Activated CD4-positive, alpha-beta T cell treated with anti-CD3 and anti-CD28 coated beads, Interleukin-2, amount 10 ng/mL, durations not matched to agents 7 days and 5 days (primary cell): ENCODE measurements at regions of chr1 and their contacts with region 1.

Region 1: GRCh38 chr1:180515864-180516388 is 13.5 kb upstream of the ACBD6 start:
- DNase-seq: peak; percentile 73
- H3K4me3 Mint-ChIP-seq: no peak overlapping the region
- H3K27ac Mint-ChIP-seq: no peak overlapping the region
- H3K4me1 Mint-ChIP-seq: peaks cover 3% of the 10 kb centered on the region
- H3K27me3 Mint-ChIP-seq: peaks cover 10% of the 10 kb centered on the region

Region 2: DNA sequence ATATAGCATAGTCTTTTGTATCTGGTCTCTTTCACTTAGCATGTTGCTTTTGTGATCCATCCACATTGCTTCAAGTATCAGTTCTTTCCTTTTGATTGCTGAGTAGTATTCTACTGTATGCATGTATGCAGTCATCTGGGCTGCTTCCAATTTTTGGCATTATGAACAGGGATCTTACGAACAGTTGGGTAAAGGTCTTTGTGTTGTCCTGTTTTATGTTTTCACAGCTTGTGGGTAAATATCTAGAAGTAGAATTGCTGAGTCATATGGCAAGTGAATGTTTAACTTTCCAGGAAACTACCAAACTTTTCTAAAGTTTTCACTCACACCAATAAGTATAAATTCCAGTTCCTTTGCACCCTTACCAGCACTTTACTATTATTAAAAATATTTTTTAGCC is 224.9 kb before region 1 on chr1:
- CTCF ChIA-PET with region 1: no interaction called
- POLR2A ChIA-PET with region 1: no interaction called
- DNase-seq: no peak
- H3K4me3 Mint-ChIP-seq: no peak overlapping the region
- H3K27ac Mint-ChIP-seq: no peak overlapping the region
- H3K4me1 Mint-ChIP-seq: peaks cover 26% of the 10 kb centered on the region
- H3K27me3 Mint-ChIP-seq: no peaks in the 10 kb centered on the region

Region 3: DNA sequence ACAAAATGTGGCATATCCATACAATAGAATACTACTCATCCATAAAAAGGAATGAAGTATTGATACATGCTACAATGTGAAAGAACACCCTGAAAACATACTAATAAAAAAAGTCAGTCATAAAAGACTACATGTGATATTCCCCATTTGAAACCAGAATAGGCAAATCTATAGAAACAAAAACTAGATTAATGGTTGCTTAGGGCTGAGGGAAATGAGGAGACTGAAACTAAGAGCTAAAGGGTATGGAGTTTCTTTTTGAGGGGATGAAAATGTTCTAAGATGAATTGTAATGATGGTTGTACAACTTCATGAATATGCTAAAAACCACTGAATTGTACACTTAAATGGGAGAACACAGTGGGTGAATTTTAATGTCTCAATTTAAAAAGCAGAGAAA is 64.4 kb before region 1 on chr1:
- CTCF ChIA-PET with region 1: no interaction called
- POLR2A ChIA-PET with region 1: no interaction called
- DNase-seq: no peak
- H3K4me3 Mint-ChIP-seq: no peak overlapping the region
- H3K27ac Mint-ChIP-seq: no peak overlapping the region
- H3K4me1 Mint-ChIP-seq: peaks cover 6% of the 10 kb centered on the region
- H3K27me3 Mint-ChIP-seq: no peaks in the 10 kb centered on the region

Region 4: DNA sequence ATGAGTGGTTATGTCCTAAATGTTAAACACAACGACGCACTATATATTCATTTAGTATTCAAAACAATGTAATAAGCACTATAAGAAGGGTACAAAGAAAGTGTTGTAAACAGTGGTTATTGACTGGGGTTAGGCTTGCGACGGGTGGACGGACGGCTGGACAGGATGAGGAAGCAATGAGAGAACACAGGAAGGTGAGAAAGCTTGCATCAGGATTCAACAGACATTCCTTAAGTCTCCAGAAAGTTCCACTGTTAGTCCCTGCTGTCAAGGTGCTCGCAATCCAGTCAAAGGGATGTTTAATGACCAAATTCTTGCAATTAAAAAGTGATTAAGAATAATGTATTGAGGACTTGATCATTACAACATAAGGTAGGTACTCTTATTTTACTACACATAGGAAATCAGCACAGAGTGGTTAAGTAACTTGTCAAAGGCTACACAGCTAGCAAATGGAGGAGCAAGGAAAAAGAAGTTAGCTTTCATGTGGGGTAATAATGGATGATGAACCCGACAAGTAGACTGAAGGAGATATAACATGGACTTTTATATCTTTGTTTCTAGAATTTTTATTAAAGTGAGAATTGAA is 12.6 kb before region 1 on chr1:
- CTCF ChIA-PET with region 1: interaction called, 14 read pairs
- POLR2A ChIA-PET with region 1: no interaction called
- DNase-seq: no peak
- H3K4me3 Mint-ChIP-seq: peak overlapping the region; percentile 95
- H3K27ac Mint-ChIP-seq: peak overlapping the region; percentile 98
- H3K4me1 Mint-ChIP-seq: peaks cover 41% of the 10 kb centered on the region
- H3K27me3 Mint-ChIP-seq: peaks cover 2% of the 10 kb centered on the region

Region 5: GRCh38 chr1:180863158-180863775 is 347.3 kb after region 1 on chr1:
- CTCF ChIA-PET with region 1: interaction called, 19 read pairs
- POLR2A ChIA-PET with region 1: no interaction called
- DNase-seq: peak; percentile 56
- H3K4me3 Mint-ChIP-seq: no peak overlapping the region
- H3K27ac Mint-ChIP-seq: no peak overlapping the region
- H3K4me1 Mint-ChIP-seq: no peaks in the 10 kb centered on the region
- H3K27me3 Mint-ChIP-seq: no peaks in the 10 kb centered on the region